ENCODE measurements at regions of chr7 and their contacts with region 1.

Region 1: GRCh38 chr7:24665564-24666294 is 91.5 kb downstream of the GSDME start:
- DNase-seq: peak; percentile 33
- CTCF ChIP-seq: peak; percentile 68

Region 2: GRCh38 chr7:24290004-24290641 is 375.6 kb before region 1 on chr7:
- in situ Hi-C with region 1: loop called (anchors 10 kb)
- DNase-seq: peak; percentile 84
- CTCF ChIP-seq: peak; percentile 69

Region 3: GRCh38 chr7:24401628-24402593 is 263.8 kb before region 1 on chr7:
- in situ Hi-C with region 1: loop called (anchors 10 kb)
- DNase-seq: peak; percentile 31
- CTCF ChIP-seq: peak; percentile 59

Measured in GM13977 (cell line).